OCI-LY7 (cell line): ENCODE measurements at regions of chr7 and their contacts with region 1.

Region 1: DNA sequence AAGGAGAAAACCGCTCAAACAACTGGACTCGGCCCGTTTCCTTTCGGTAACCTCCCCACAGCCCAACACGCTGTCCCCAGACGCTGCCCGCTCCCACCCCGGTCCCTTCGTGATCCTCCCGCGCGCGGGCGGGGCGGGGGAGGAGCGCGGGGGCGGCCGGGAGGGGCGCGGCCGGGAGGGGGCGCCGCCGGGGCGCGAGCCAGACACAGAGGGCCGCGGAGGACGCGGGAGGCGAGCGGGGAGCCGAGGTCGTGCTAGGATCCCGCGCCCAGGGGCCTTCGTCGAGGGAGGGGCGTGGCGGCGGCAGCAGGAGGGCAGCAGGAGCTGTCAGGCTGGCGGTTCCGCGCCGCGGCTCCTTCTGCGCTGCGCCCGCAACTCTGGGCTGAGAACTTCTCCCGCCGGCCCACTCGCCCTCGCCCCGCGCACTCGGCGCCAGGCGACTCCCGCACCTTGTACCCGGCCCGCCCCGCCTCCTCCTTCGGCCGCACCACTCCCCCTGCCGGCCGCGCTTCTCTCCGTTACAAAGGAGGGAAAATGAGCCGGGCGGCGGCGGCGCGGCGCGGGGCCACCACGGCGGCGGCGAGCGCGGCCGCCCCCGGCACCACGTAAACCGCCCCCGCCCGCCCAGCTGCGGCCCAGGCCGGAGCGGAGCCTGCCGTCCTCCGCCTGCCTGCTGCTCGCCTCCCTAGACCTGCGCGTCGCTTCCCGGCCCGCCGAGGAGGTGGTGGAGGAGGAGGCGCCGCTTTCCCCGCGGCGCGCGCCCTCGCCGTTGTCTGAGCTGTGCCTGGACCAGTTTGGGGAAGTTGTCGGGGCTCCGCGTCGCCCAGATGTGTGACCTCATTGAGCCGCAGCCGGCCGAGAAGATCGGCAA is at the start of gene CDK14:
- DNase-seq: peak; percentile 61
- H3K4me3 ChIP-seq: peak within 1 kb of the TSS; percentile 71
- H3K27ac ChIP-seq: no peak within 1 kb of the TSS
- H3K4me1 ChIP-seq: peaks cover 3% of the 10 kb centered on the region
- CTCF ChIP-seq: peak; percentile 52
- total RNA-seq, gene CDK14: 90.7 and 112 TPM in 2 replicates

Region 2: DNA sequence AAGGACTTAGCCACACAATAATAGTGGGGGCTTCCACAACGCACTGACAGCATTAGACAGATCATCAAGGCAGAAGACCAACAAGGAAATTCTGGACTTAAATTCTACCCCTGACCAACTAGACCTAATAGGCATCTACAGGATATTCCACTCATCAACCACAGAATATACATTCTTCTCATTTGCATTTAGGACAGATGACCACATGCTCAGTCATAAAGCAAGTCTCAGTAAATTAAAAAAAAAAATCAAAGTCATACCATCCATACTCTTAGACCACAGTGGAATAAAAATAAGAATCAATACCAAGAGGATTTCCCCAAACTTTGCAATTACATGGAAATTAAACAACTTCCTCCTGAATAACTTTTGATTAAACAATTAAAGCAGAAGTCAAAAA is 156.0 kb after region 1 on chr7:
- CTCF ChIA-PET with region 1: no interaction called
- POLR2A ChIA-PET with region 1: no interaction called
- intact Hi-C with region 1: no loop called
- DNase-seq: no peak
- H3K4me3 ChIP-seq: no peak overlapping the region
- H3K27ac ChIP-seq: no peak overlapping the region
- H3K4me1 ChIP-seq: peaks cover 94% of the 10 kb centered on the region
- CTCF ChIP-seq: no peak

Region 3: DNA sequence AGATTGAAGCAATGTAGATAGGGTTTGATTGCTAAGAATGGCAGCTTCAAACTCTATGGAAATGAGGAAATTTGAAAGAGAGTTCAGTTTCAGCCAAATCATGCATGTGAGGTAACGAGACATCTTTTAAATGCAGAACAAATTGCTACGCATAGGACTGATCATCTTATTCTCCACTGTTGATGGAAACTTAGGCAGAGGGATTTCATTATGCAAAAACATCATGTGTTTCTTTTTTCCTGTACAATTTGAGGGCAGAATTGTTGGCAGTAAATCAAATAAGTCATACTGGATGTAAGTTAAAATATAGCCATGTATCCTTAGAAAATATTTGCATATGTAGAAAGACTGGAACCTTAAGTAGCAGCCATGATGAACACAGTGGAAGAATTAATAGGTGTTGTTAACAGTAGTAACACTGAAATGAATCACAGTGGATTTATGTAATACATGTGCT is 327.5 kb after region 1 on chr7:
- CTCF ChIA-PET with region 1: no interaction called
- POLR2A ChIA-PET with region 1: no interaction called
- intact Hi-C with region 1: loop called (anchors 10 kb)
- DNase-seq: no peak
- H3K4me3 ChIP-seq: no peak overlapping the region
- H3K27ac ChIP-seq: no peak overlapping the region
- H3K4me1 ChIP-seq: no peaks in the 10 kb centered on the region
- CTCF ChIP-seq: no peak